ENCODE measurements at regions of chr20 and their contacts with region 1.

Region 1: DNA sequence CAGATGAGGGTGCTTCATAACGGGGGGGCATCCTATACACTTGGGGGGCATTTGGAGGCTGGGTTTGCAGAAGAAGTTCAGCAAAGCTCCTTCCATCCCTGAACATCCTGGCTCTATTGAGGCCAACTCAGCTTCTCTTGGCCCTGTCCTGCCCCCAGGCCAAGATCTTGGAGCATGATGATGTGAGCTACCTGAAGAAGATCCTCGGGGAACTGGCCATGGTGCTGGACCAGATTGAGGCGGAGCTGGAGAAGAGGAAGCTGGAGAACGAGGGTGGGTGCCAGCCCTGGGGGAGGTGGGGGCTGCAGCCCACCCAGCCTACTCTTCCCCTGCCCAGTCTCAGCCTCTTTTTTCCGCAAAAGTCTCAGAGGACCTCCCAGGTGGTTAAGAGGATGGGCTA is 17.2 kb downstream of the GDAP1L1 start:
- DNase-seq: peak; percentile 42

Region 2: DNA sequence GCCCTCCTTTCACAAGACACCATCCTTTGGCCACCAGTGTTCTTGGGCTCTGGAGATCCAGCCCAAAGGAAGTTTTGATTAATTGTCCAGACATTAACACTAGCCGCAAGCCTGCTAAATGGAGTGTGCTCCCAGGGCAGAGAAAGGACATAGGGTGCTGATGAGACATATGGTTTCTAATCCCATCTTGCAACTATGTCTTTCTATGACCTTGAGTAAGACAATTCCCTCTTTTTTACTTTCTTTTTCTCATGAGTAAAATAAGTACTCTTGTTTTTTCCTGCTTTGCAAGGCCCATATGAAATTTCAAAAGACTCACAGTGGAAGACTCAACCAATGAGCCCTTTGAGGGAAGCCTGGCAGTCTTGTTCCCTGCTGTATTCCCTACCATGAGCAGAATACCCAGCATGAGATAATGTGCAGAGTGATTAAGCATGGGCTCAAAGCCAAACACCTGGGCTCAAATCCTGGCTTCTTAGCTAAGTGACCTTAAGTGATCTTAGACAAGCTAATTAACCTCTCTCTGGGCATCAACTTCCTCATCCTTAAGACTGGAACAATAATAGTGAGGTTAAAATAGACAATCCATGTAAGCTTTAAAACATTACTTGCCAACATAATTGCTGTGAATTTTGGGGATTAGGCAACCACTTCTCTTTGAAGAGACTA is 1440.8 kb after region 1 on chr20 and contains the start of gene WFDC10B:
- intact Hi-C with region 1: loop called in 1 of 2 experiments (anchors 5 kb)
- DNase-seq: no peak
- total RNA-seq, gene WFDC10B: 0.48 TPM in 1 of 2 donors, not detected in the other

Measured in posterior vena cava (tissue), 2 donors.